ENCODE measurements at regions of chr1 and their contacts with region 1.

Region 1: GRCh38 chr1:211675230-211676105 is at the start of gene NEK2:
- DNase-seq: peak; percentile 82
- ATAC-seq: peak; percentile 88
- H3K4me3 ChIP-seq: peak within 1 kb of the TSS; percentile 19 to 80 (median 68)
- H3K4me3 Mint-ChIP-seq: peak within 1 kb of the TSS; percentile 93
- H3K27ac ChIP-seq: peak within 1 kb of the TSS in 1 of 2 donors; percentile 49
- H3K27ac Mint-ChIP-seq: peak within 1 kb of the TSS; percentile 66
- H3K4me1 ChIP-seq: peaks cover 21 to 30% of the 10 kb centered on the region in 2 donors
- H3K4me1 Mint-ChIP-seq: peaks cover 35% of the 10 kb centered on the region
- H3K27me3 ChIP-seq: no peaks in the 10 kb centered on the region
- H3K27me3 Mint-ChIP-seq: no peaks in the 10 kb centered on the region
- CTCF ChIP-seq: no peak
- total RNA-seq, gene NEK2: 0.32 TPM in 1 of 2 replicates, not detected in the other

Region 2: GRCh38 chr1:211258756-211259637 is 416.5 kb before region 1 on chr1 and contains the start of gene RCOR3:
- CTCF ChIA-PET with region 1: no interaction called
- POLR2A ChIA-PET with region 1: no interaction called
- intact Hi-C with region 1: loop called (anchors 2 kb)
- DNase-seq: peak; percentile 93
- ATAC-seq: peak; percentile 74
- H3K4me3 ChIP-seq: peak within 1 kb of the TSS; percentile 81 to 93 (median 90)
- H3K4me3 Mint-ChIP-seq: peak within 1 kb of the TSS; percentile 92
- H3K27ac ChIP-seq: peak within 1 kb of the TSS; percentile 88 to 90
- H3K27ac Mint-ChIP-seq: peak within 1 kb of the TSS; percentile 96
- H3K4me1 ChIP-seq: peaks cover 11 to 16% of the 10 kb centered on the region in 2 donors
- H3K4me1 Mint-ChIP-seq: peaks cover 15% of the 10 kb centered on the region
- H3K27me3 ChIP-seq: no peaks in the 10 kb centered on the region
- H3K27me3 Mint-ChIP-seq: no peaks in the 10 kb centered on the region
- CTCF ChIP-seq: peak; percentile 84
- total RNA-seq, gene RCOR3: 120 and 124 TPM in 2 replicates

Region 3: GRCh38 chr1:212782422-212783154 is 1107.1 kb after region 1 on chr1:
- CTCF ChIA-PET with region 1: no interaction called
- POLR2A ChIA-PET with region 1: no interaction called
- intact Hi-C with region 1: loop called (anchors 5 kb)
- DNase-seq: peak; percentile 54
- ATAC-seq: peak; percentile 51
- H3K4me3 ChIP-seq: no peak overlapping the region
- H3K4me3 Mint-ChIP-seq: no peak overlapping the region
- H3K27ac ChIP-seq: no peak overlapping the region
- H3K27ac Mint-ChIP-seq: no peak overlapping the region
- H3K4me1 ChIP-seq: no peaks in the 10 kb centered on the region
- H3K4me1 Mint-ChIP-seq: no peaks in the 10 kb centered on the region
- H3K27me3 ChIP-seq: no peaks in the 10 kb centered on the region
- H3K27me3 Mint-ChIP-seq: no peaks in the 10 kb centered on the region
- CTCF ChIP-seq: peak; percentile 87